ENCODE measurements at regions of chr1 and their contacts with region 1.

Region 1: GRCh38 chr1:234373064-234373958 is at the start of gene COA6:
- DNase-seq: peak; percentile 86
- H3K4me3 Mint-ChIP-seq: peak within 1 kb of the TSS; percentile 94
- H3K27ac Mint-ChIP-seq: peak within 1 kb of the TSS; percentile 99
- H3K4me1 Mint-ChIP-seq: peaks cover 47% of the 10 kb centered on the region
- H3K27me3 Mint-ChIP-seq: no peaks in the 10 kb centered on the region
- total RNA-seq, gene COA6: 60.3 and 63.6 TPM in 2 replicates

Region 2: GRCh38 chr1:234326497-234327366 is 46.6 kb before region 1 on chr1:
- intact Hi-C with region 1: loop called (anchors 1 kb)
- DNase-seq: peak; percentile 56
- H3K4me3 Mint-ChIP-seq: peak overlapping the region; percentile 74
- H3K27ac Mint-ChIP-seq: peak overlapping the region; percentile 2
- H3K4me1 Mint-ChIP-seq: peaks cover 23% of the 10 kb centered on the region
- H3K27me3 Mint-ChIP-seq: peaks cover 29% of the 10 kb centered on the region

Region 3: DNA sequence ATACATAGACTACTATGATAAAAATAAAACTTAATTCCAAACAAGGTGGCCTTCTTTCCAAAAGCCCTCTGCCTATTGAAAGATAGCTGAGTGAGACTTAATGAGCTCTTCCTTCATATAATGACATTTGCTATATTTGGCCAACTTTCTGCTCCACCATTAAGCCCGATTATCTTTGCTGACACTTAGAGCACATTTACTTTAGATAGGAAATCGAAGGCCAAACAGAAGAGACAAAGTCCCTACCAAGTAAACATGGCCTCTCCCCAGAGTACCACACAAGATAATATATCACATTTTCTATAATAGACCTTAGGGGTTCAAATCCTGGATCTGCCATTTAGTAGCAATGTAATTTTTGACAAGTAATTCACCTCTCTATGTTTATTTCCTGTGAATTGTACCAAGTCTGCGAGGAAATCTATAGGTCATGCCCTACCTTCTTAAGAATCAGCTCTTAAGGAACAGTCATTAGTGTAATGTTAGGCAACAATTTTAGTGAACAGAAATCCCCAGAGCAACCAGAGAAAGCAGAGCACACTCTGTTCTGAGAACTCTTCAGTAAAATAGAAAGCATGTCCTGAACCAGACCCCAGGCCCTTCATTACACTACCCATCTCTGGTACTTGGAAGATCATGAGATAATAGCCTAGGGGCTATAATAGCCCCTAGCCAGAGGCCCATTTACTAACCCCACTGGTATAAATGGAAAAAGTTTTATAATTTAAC is 17.4 kb before region 1 on chr1:
- intact Hi-C with region 1: loop called (anchors 1 kb)
- DNase-seq: no peak
- H3K4me3 Mint-ChIP-seq: peak overlapping the region; percentile 90
- H3K27ac Mint-ChIP-seq: peak overlapping the region; percentile 82
- H3K4me1 Mint-ChIP-seq: peaks cover 19% of the 10 kb centered on the region
- H3K27me3 Mint-ChIP-seq: peaks cover 20% of the 10 kb centered on the region

Region 4: GRCh38 chr1:234398849-234399381 is 25.6 kb after region 1 on chr1:
- intact Hi-C with region 1: loop called (anchors 2 kb)
- DNase-seq: no peak
- H3K4me3 Mint-ChIP-seq: peak overlapping the region; percentile 62
- H3K27ac Mint-ChIP-seq: peak overlapping the region; percentile 85
- H3K4me1 Mint-ChIP-seq: peaks cover 49% of the 10 kb centered on the region
- H3K27me3 Mint-ChIP-seq: no peaks in the 10 kb centered on the region

Region 5: DNA sequence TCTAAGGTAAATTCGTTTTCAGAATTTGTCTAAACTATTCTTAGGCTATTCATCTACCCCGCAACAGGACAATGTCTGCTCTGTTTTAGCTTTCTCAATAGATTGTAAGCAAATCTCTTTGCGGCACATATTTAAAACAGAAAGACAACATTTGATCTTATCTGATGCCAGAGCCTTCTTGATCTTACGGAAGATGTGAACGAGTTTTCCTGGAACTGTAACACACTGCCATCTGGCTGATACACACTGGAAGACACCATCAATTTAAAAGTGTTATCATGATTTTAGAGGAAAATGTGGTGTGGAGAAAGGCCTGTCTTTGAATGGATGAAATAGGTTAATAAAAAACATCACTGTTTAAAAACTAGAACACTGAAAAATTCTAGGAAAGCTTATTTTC is 36.0 kb after region 1 on chr1:
- intact Hi-C with region 1: loop called (anchors 1 kb)
- DNase-seq: no peak
- H3K4me3 Mint-ChIP-seq: peak overlapping the region; percentile 74
- H3K27ac Mint-ChIP-seq: peak overlapping the region; percentile 92
- H3K4me1 Mint-ChIP-seq: peaks cover 35% of the 10 kb centered on the region
- H3K27me3 Mint-ChIP-seq: no peaks in the 10 kb centered on the region

Region 6: GRCh38 chr1:234599617-234600417 is 226.5 kb after region 1 on chr1:
- intact Hi-C with region 1: loop called (anchors 10 kb)
- DNase-seq: peak; percentile 70
- H3K4me3 Mint-ChIP-seq: peak overlapping the region; percentile 82
- H3K27ac Mint-ChIP-seq: peak overlapping the region; percentile 92
- H3K4me1 Mint-ChIP-seq: peaks cover 53% of the 10 kb centered on the region
- H3K27me3 Mint-ChIP-seq: no peaks in the 10 kb centered on the region

Measured in activated T-helper 2 cell treated with anti-CD3 and anti-CD28 coated beads, Interferon-gamma antibody, Interleukin-2, Interleukin-4, amounts not matched to agents 10 μg/mL and 5 μg/mL and 100 μg/mL, durations not matched to agents 14 hours and 24 hours and 36 hours (primary cell).